ENCODE measurements at regions of chr22 and their contacts with region 1.

Region 1: DNA sequence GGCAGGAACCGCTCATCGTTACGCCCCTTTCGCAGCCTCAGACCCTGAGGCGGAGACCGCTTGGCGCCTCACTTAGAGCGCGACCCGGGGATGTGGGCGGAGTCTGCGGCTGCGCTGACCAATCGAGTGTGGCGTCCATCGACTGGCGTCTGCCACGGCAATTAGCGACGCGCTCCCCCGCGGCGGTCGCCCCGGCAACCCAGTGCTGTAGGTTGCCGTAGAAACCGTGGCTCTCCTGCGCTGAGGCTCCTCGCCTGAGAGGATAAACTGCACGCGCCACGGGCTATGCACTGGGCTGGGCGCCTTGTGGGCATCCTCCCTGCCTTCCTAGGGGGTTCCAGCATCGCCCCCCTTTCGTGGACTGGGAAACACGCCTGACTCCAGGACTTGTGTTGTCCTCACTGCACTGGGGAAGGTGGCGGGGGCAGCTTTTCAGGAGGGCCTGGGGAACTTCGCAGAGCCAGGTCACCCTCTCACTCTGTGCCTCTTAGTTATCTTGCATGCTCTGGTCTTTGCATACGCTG is 701 bp upstream of the P2RX6 start:
- DNase-seq: peak; percentile 40 to 91
- H3K4me3 ChIP-seq: peak overlapping the region; percentile 27 to 59
- H3K27ac ChIP-seq: peak overlapping the region; percentile 57 to 68
- H3K4me1 ChIP-seq: peaks cover 10 to 18% of the 10 kb centered on the region in 2 donors
- H3K27me3 ChIP-seq: no peaks in the 10 kb centered on the region
- CTCF ChIP-seq: no peak

Region 2: DNA sequence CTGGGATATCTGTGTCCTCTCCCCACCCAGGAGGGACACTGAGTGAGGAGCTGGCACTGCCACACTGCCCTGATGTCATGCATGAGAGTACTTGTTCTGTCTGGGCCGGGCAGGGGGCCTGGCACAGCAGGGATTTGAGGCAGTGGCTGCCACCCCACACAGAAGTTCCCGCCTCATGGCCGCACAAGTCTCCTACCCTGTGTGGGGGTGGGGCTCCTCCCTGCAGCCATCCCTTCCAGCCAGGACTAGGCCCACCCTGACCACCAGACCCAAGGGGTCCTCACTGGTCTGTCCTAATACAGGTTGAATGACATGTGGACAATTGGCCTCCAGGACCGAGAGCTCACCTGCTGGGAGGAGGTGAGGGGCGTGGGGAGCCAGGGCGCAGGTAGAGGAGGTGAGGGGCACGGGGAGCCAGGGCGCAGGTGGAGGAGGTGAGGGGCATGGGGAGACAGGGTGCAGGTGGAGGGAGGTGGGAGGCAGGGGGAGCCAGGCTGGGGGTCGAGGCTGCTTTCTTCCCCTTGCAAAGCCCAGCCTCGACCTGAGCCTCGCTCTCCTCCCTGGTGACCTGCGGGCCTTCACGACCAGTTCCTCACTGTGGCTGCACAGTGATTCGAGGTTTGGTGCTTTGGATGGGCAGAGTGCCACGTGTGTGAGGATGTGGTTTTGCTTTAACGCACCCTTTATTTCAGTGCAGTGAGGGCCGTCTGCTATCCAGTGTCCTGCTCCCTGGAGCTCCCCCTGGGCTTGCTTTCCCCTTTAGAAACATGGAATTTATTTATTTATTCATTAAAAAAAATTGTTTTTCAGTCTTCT is 24.7 kb before region 1 on chr22:
- intact Hi-C with region 1: loop called (anchors 2 kb)
- DNase-seq: no peak
- H3K4me3 ChIP-seq: no peak overlapping the region
- H3K27ac ChIP-seq: no peak overlapping the region
- H3K4me1 ChIP-seq: no peaks in the 10 kb centered on the region
- H3K27me3 ChIP-seq: no peaks in the 10 kb centered on the region
- CTCF ChIP-seq: no peak

Region 3: DNA sequence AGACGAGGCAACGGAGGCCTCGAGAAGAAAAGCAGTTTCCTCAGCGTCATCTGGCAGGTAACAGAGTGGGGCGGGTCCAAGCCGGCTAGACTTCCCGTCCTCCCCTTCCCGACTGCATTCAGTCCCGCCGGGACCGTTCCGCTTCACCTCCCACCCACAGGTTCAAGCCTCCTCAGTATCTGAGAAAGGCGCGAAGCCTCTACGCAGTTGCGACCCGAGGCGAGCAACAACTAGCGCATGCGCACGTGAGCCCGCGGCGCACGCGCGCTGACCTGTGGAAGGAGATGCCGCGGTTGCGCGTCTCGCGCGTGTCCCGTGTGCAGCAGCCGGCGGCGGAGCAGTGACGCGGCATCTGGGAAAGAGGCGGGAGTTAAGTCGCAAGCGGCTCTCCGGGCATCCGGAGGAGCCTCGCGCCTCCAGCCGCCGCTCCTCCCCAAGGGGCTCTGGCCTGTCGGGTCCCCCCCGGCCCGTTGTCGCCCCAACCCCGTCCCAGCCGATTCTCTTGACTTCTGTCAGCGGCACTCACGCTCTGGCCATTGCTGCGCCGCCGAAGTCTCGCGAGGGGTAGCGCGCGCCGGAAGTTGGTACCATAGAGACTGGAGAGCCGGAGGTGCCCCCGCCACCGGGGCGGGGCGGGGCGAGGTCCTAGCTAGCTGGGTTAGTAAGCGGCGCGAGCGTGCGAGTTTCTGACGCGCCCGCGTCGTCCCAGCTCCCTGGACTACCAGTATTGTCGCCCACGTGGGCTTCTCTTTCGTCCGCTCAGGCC is 12.5 kb before region 1 on chr22 and contains the start of gene THAP7:
- intact Hi-C with region 1: loop called (anchors 1 kb)
- DNase-seq: peak; percentile 91 to 99
- H3K4me3 ChIP-seq: peak within 1 kb of the TSS; percentile 70 to 94
- H3K27ac ChIP-seq: peak within 1 kb of the TSS; percentile 97 to 98
- H3K4me1 ChIP-seq: peaks cover 13 to 30% of the 10 kb centered on the region in 2 donors
- H3K27me3 ChIP-seq: no peaks in the 10 kb centered on the region
- CTCF ChIP-seq: no peak
- total RNA-seq, gene THAP7: 37.9 TPM

Region 4: DNA sequence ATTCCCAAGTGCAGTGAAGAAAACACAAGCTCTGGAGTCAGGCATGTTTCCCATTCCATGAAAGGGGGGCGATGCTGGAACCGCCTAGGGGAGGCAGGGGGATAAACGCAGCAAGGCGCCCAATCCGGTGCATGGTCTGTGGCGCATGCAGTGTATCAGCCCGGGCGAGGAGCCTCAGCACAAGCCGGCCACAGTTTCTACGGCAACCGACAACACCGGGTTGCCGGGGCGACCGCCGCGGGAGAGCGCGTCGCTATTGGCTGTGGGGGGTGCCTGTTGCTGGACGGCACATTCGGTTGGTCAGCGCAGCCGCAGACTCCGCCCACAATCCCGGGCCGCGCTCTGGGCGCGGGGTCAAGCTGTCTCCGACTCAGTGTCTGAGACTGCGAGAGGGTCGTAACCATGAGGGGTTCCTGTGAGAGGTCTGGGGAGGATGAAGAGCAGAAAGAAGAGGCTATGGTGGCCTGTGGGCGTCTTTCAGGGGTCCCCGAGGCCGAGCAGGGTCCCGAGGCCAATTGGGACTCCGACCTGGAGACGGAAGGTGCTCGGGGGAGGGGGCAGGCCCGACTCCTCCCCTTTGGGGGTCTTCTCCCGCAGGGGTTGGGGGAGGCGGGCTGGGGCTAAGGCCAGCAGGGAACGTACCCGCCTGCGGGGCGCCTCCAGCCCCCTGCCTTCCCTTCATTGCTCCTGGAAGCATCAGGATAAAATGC is 31.5 kb after region 1 on chr22 and contains the start of gene LRRC74B:
- intact Hi-C with region 1: no loop called
- DNase-seq: peak; percentile 62 to 89
- H3K4me3 ChIP-seq: peak within 1 kb of the TSS; percentile 37 to 41
- H3K27ac ChIP-seq: no peak within 1 kb of the TSS
- H3K4me1 ChIP-seq: peaks cover 7 to 15% of the 10 kb centered on the region in 2 donors
- H3K27me3 ChIP-seq: no peaks in the 10 kb centered on the region
- CTCF ChIP-seq: no peak
- total RNA-seq, gene LRRC74B: 2.6 TPM